Transverse colon (tissue), 4 donors: ENCODE measurements at regions of chr6 and their contacts with region 1.

Region 1: DNA sequence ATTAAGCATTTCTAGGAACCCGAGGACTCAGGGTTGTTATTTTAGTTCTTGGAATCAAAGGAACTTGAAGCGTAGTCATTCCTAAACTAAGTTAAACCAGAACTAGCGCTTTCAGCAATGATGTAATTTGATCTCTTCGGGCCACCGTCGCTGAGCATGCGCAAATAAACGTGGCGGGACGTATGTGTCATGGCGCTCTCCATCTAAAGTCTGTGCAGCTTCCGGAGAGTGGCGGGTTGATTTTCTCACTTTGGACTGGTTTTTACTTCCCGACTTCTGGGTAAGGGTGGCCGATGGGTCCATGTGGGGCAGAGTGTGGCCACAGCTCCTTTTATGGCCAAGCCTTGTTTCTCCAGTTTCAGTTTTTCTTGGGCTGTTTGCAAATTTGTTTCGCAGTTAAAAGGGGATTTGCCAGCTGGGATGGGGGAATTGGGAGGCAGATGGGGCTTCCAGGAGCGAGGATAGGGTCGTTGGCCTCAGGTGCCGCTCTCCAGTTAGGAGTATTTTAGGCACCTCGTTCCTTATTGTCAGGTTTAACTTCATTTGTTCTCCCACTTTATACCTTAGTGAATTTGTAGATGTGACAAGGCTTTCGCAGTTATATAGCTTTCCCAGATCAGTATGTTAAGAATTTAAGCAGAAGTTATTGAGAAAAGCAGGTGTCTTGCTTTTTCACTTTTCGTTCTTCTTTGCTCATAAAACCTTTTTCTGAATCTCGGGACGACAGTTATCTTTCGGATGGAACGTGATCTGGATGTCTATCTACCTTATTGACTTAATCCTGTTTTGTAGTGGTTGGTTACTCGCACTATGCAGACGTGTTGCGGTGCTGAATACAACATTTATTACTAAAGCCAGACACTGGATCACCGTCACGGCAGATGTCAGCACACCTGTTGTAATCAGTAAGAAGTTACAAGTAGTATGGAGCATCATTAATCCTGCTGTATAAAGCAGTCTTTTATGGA is at the start of gene CDKAL1:
- DNase-seq: peak; percentile 93
- H3K4me3 ChIP-seq: peak within 1 kb of the TSS; percentile 63 to 80 (median 74)
- H3K27ac ChIP-seq: peak within 1 kb of the TSS; percentile 84 to 89 (median 86)
- H3K4me1 ChIP-seq: peaks cover 5 to 17% (median 9%) of the 10 kb centered on the region in 4 donors
- H3K27me3 ChIP-seq: no peaks in the 10 kb centered on the region
- CTCF ChIP-seq: no peak
- EP300 ChIP-seq: no peak
- POLR2A ChIP-seq: peak; percentile 55
- total RNA-seq, gene CDKAL1: 4.8 to 21.7 (median 12.5) TPM

Region 2: GRCh38 chr6:20085817-20086216 is 448.8 kb before region 1 on chr6:
- in situ Hi-C with region 1: loop called (anchors 10 to 25 kb)
- intact Hi-C with region 1: loop called (anchors 5 kb)
- DNase-seq: no peak
- H3K4me3 ChIP-seq: no peak overlapping the region
- H3K27ac ChIP-seq: no peak overlapping the region
- H3K4me1 ChIP-seq: peaks cover 0 to 3% (median 0%) of the 10 kb centered on the region in 4 donors
- H3K27me3 ChIP-seq: no peaks in the 10 kb centered on the region
- CTCF ChIP-seq: no peak
- EP300 ChIP-seq: no peak
- POLR2A ChIP-seq: no peak

Region 3: GRCh38 chr6:20092071-20092566 is 442.5 kb before region 1 on chr6:
- in situ Hi-C with region 1: loop called (anchors 10 to 25 kb)
- intact Hi-C with region 1: loop called (anchors 5 kb)
- DNase-seq: no peak
- H3K4me3 ChIP-seq: no peak overlapping the region
- H3K27ac ChIP-seq: no peak overlapping the region
- H3K4me1 ChIP-seq: no peaks in the 10 kb centered on the region
- H3K27me3 ChIP-seq: no peaks in the 10 kb centered on the region
- CTCF ChIP-seq: peak; percentile 69 to 80 (median 77)
- EP300 ChIP-seq: no peak
- POLR2A ChIP-seq: no peak

Region 4: DNA sequence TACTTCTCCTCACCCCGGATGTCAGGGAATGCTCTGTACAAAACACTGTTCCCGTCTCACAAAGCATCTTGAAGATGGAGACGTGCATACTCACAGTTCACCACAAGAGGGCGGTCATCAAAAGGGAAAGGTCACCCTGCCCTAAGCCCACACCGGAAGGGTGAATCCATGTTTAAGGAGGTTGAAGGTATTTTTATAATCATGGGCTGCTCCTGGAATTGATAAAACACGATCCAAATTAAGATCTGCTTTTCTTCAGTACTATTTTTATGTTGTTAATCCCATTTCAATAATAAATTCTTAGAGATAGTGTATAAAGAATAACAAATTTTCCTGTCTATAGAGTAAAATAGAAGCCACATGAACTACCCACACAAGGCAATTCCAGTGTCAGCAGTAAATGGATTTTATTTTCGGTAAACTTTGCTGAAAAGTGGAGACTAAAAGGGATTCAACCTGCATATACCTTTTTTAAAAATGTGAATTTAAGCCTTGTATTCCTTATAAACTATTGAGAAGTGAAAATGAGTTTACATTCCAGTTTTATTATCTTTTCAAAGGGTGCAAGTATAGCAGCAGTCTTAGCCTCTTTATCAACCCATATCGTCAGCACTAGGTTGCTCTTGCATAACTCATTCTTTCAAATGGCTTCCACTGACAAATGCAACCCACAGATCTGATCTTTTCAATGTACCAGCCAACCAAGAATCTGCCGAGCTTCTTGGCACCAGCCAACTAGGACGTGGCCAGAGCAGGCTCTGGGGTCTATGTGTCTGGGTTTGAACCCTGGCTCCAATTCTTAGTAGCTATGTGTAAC is 242.6 kb before region 1 on chr6:
- in situ Hi-C with region 1: loop called (anchors 5 kb)
- intact Hi-C with region 1: loop called (anchors 5 kb)
- DNase-seq: peak; percentile 87
- H3K4me3 ChIP-seq: no peak overlapping the region
- H3K27ac ChIP-seq: no peak overlapping the region
- H3K4me1 ChIP-seq: peaks cover 0 to 8% (median 2%) of the 10 kb centered on the region in 4 donors
- H3K27me3 ChIP-seq: no peaks in the 10 kb centered on the region
- CTCF ChIP-seq: peak; percentile 89 to 95 (median 91)
- EP300 ChIP-seq: no peak
- POLR2A ChIP-seq: no peak

Region 5: GRCh38 chr6:20401205-20402091 is 133.1 kb before region 1 on chr6 and contains the start of gene E2F3:
- in situ Hi-C with region 1: loop called in 3 of 4 experiments (anchors 10 kb)
- intact Hi-C with region 1: loop called (anchors 10 kb)
- DNase-seq: peak; percentile 100
- H3K4me3 ChIP-seq: peak within 1 kb of the TSS; percentile 69 to 94 (median 76)
- H3K27ac ChIP-seq: peak within 1 kb of the TSS; percentile 87 to 98 (median 89)
- H3K4me1 ChIP-seq: peaks cover 0 to 18% (median 6%) of the 10 kb centered on the region in 4 donors
- H3K27me3 ChIP-seq: no peaks in the 10 kb centered on the region
- CTCF ChIP-seq: no peak
- EP300 ChIP-seq: no peak
- POLR2A ChIP-seq: peak; percentile 44
- total RNA-seq, gene E2F3: 2.2 to 16.3 (median 5.6) TPM

Region 6: DNA sequence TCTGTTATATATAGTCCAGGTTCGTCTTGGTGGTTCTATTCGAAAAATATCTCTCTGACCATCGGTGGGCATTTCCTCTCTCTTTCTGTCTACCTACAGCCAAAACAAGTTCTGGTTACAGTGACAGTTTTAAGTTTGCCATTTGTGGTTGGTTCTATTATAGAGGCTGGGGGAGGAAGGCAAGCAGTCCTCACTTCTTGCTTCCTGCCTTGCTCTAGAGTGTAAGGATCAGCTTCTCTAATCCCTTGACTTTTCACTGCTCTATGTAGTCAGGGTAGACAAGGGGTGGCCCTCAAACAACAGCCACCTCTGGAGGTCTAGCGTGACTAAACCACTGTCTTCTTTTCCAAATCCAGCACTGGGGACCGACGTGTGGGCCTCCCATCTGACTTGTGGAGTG is 116.8 kb before region 1 on chr6:
- in situ Hi-C with region 1: loop called in 1 of 4 experiments (anchors 10 kb)
- intact Hi-C with region 1: no loop called
- DNase-seq: no peak
- H3K4me3 ChIP-seq: no peak overlapping the region
- H3K27ac ChIP-seq: peak overlapping the region in 2 of 4 donors; percentile 63 to 72
- H3K4me1 ChIP-seq: peaks cover 5 to 49% (median 27%) of the 10 kb centered on the region in 4 donors
- H3K27me3 ChIP-seq: no peaks in the 10 kb centered on the region
- CTCF ChIP-seq: no peak
- EP300 ChIP-seq: no peak
- POLR2A ChIP-seq: no peak